AG04449 (cell line): ENCODE measurements at regions of chr1 and their contacts with region 1.

Region 1: GRCh38 chr1:152459596-152460528 is 45.8 kb upstream of the CRNN start:
- DNase-seq: no peak
- H3K4me3 ChIP-seq: 0 out of 2 replicates have a peak overlapping the region, but pooled peaks have one; percentile 3
- CTCF ChIP-seq: peak; percentile 78

Region 2: GRCh38 chr1:152047730-152048402 is 412.0 kb before region 1 on chr1:
- CTCF ChIA-PET with region 1: interaction called, 69 read pairs
- POLR2A ChIA-PET with region 1: no interaction called
- DNase-seq: peak; percentile 98
- H3K4me3 ChIP-seq: peak overlapping the region; percentile 47
- CTCF ChIP-seq: peak; percentile 90

Region 3: GRCh38 chr1:152189657-152190442 is 270.0 kb before region 1 on chr1:
- CTCF ChIA-PET with region 1: interaction called, 142 read pairs
- POLR2A ChIA-PET with region 1: no interaction called
- DNase-seq: no peak
- H3K4me3 ChIP-seq: no peak overlapping the region
- CTCF ChIP-seq: peak; percentile 63

Region 4: GRCh38 chr1:152398812-152399698 is 60.8 kb before region 1 on chr1:
- CTCF ChIA-PET with region 1: interaction called, 18 read pairs
- POLR2A ChIA-PET with region 1: no interaction called
- DNase-seq: no peak
- H3K4me3 ChIP-seq: no peak overlapping the region
- CTCF ChIP-seq: no peak

Region 5: GRCh38 chr1:152410599-152410998 is 49.3 kb before region 1 on chr1:
- CTCF ChIA-PET with region 1: no interaction called
- POLR2A ChIA-PET with region 1: no interaction called
- DNase-seq: no peak
- H3K4me3 ChIP-seq: no peak overlapping the region
- CTCF ChIP-seq: no peak

Region 6: GRCh38 chr1:152473887-152474537 is 14.2 kb after region 1 on chr1:
- CTCF ChIA-PET with region 1: interaction called, 22 read pairs
- POLR2A ChIA-PET with region 1: no interaction called
- DNase-seq: no peak
- H3K4me3 ChIP-seq: no peak overlapping the region
- CTCF ChIP-seq: no peak

Region 7: GRCh38 chr1:152623203-152623844 is 163.5 kb after region 1 on chr1:
- CTCF ChIA-PET with region 1: no interaction called
- POLR2A ChIA-PET with region 1: no interaction called
- DNase-seq: no peak
- H3K4me3 ChIP-seq: no peak overlapping the region
- CTCF ChIP-seq: no peak

Region 8: GRCh38 chr1:152823291-152823690 is 363.4 kb after region 1 on chr1:
- CTCF ChIA-PET with region 1: no interaction called
- POLR2A ChIA-PET with region 1: no interaction called
- DNase-seq: no peak
- H3K4me3 ChIP-seq: no peak overlapping the region
- CTCF ChIP-seq: no peak